Psoas muscle (tissue), 8 donors: ENCODE measurements at regions of chr20 and their contacts with region 1.

Region 1: GRCh38 chr20:3888622-3889488 is at the start of gene PANK2:
- DNase-seq: peak; percentile 100
- ATAC-seq: peak; percentile 96 to 98 (median 98)
- H3K4me3 ChIP-seq: peak within 1 kb of the TSS; percentile 81
- H3K27ac ChIP-seq: peak within 1 kb of the TSS; percentile 89
- H3K4me1 ChIP-seq: peaks cover 41% of the 10 kb centered on the region
- H3K27me3 ChIP-seq: no peaks in the 10 kb centered on the region
- CTCF ChIP-seq: peak; percentile 41
- total RNA-seq, gene PANK2: 12.6 to 20.5 (median 17.3) TPM

Region 2: DNA sequence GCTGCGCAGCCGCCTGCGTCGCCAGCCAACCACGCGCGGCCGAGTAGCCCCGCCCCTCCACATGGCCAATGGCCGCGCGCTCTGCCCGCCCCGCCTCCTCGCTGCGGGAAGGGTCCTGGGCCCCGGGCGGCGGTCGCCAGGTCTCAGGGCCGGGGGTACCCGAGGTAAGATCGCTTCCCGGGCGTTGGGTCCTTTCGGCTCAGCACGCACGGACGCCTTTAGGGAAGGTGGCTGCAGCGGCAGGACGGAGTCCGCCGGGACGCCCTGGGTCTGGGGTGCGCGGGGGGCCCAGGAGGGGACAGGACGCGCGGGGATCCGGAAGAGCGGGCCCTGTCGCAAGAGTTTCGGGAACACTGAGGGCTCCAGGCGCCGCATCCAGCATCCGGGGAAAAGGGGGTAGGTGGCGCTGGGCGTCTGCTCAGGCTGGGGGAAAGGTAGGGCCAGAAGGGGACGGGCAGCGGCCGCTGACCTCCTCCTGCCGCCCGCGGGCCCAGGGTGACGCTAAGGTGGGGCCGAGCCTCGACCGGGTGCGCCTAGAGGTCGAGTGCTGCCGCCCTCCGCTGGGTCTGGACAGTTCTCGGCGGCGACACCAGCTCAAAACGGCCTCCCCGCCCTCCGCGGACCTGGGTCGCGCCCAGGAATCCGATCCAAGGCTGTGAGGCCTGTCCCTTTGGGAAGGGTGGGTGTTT is 42.0 kb before region 1 on chr20 and contains the start of gene MAVS:
- intact Hi-C with region 1: no loop called
- DNase-seq: peak; percentile 90 to 95
- ATAC-seq: peak; percentile 96 to 98 (median 98)
- H3K4me3 ChIP-seq: peak within 1 kb of the TSS; percentile 100
- H3K27ac ChIP-seq: peak within 1 kb of the TSS; percentile 90
- H3K4me1 ChIP-seq: no peaks in the 10 kb centered on the region
- H3K27me3 ChIP-seq: no peaks in the 10 kb centered on the region
- CTCF ChIP-seq: no peak
- total RNA-seq, gene MAVS: 49.7 to 61.3 (median 50.7) TPM

Region 3: DNA sequence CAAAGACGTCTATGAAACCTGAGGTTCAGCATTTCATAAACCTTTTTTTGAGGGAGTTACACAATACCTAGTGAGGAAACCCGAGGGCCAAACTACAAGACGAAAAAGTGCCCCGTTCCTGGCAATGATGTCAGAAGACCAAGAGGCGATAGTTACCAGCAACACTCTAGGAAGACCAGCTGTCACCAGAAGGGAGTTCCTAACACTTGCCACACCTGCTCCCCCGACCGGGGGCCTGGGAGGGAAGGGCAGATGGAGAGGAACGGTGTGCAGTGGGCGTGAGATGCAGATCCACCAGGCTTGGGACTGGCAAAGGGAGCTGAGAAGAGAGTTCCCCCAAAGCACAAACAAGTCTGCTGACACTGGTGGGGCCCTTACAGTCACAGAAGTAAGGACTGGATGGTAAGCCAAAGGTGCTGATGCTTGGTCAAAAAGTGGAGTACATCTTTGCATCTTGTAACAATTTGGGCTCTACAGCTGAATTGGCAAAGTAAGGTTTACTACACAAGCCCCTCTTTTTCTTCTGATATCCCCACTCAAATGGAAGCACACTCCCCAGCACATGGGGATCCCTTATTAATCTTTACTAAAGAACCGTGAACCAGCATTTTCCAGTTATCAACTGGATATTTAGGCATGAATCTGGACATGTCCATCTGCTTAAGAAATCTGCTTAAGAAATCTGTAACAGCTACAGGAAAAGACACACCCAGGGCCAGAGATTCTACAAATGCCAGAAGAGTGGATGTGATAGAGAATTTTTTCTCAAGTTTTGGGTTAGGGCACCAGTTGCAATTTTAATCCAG is 38.8 kb after region 1 on chr20:
- intact Hi-C with region 1: loop called in 1 of 2 experiments (anchors 5 kb)
- DNase-seq: peak in 1 of 2 donors; percentile 37
- ATAC-seq: peak in 3 of 4 donors; percentile 24 to 43 (median 38)
- H3K4me3 ChIP-seq: no peak overlapping the region
- H3K27ac ChIP-seq: no peak overlapping the region
- H3K4me1 ChIP-seq: peaks cover 19% of the 10 kb centered on the region
- H3K27me3 ChIP-seq: no peaks in the 10 kb centered on the region
- CTCF ChIP-seq: no peak

Region 4: GRCh38 chr20:4014031-4014474 is 125.2 kb after region 1 on chr20:
- intact Hi-C with region 1: loop called in 1 of 2 experiments (anchors 5 kb)
- DNase-seq: no peak
- ATAC-seq: peak in 2 of 4 donors; percentile 36 to 51
- H3K4me3 ChIP-seq: peak overlapping the region; percentile 85
- H3K27ac ChIP-seq: no peak overlapping the region
- H3K4me1 ChIP-seq: peaks cover 5% of the 10 kb centered on the region
- H3K27me3 ChIP-seq: no peaks in the 10 kb centered on the region
- CTCF ChIP-seq: peak; percentile 50

Region 5: GRCh38 chr20:4089756-4090487 is 201.1 kb after region 1 on chr20:
- intact Hi-C with region 1: loop called (anchors 5 kb)
- DNase-seq: no peak
- ATAC-seq: no peak
- H3K4me3 ChIP-seq: no peak overlapping the region
- H3K27ac ChIP-seq: no peak overlapping the region
- H3K4me1 ChIP-seq: peaks cover 3% of the 10 kb centered on the region
- H3K27me3 ChIP-seq: no peaks in the 10 kb centered on the region
- CTCF ChIP-seq: no peak